Dendritic cell treated with granulocyte-macrophage colony-stimulating factor and Interleukin-4, amounts not matched to agents 40 ng/mL and 50 ng/mL, for 4 days (primary cell): ENCODE measurements at regions of chr10 and their contacts with region 1.

Region 1: GRCh38 chr10:74262856-74263255 is 111.8 kb downstream of the ADK start:
- H3K4me3 Mint-ChIP-seq: no peak overlapping the region
- H3K27ac Mint-ChIP-seq: no peak overlapping the region
- H3K4me1 Mint-ChIP-seq: peaks cover 9% of the 10 kb centered on the region
- H3K27me3 Mint-ChIP-seq: no peaks in the 10 kb centered on the region

Region 2: GRCh38 chr10:74328388-74328787 is 65.5 kb after region 1 on chr10:
- intact Hi-C with region 1: no loop called
- H3K4me3 Mint-ChIP-seq: no peak overlapping the region
- H3K27ac Mint-ChIP-seq: peak overlapping the region; percentile 84
- H3K4me1 Mint-ChIP-seq: peaks cover 21% of the 10 kb centered on the region
- H3K27me3 Mint-ChIP-seq: no peaks in the 10 kb centered on the region

Region 3: GRCh38 chr10:74382663-74383062 is 119.8 kb after region 1 on chr10:
- intact Hi-C with region 1: no loop called
- H3K4me3 Mint-ChIP-seq: no peak overlapping the region
- H3K27ac Mint-ChIP-seq: no peak overlapping the region
- H3K4me1 Mint-ChIP-seq: peaks cover 33% of the 10 kb centered on the region
- H3K27me3 Mint-ChIP-seq: no peaks in the 10 kb centered on the region

Region 4: DNA sequence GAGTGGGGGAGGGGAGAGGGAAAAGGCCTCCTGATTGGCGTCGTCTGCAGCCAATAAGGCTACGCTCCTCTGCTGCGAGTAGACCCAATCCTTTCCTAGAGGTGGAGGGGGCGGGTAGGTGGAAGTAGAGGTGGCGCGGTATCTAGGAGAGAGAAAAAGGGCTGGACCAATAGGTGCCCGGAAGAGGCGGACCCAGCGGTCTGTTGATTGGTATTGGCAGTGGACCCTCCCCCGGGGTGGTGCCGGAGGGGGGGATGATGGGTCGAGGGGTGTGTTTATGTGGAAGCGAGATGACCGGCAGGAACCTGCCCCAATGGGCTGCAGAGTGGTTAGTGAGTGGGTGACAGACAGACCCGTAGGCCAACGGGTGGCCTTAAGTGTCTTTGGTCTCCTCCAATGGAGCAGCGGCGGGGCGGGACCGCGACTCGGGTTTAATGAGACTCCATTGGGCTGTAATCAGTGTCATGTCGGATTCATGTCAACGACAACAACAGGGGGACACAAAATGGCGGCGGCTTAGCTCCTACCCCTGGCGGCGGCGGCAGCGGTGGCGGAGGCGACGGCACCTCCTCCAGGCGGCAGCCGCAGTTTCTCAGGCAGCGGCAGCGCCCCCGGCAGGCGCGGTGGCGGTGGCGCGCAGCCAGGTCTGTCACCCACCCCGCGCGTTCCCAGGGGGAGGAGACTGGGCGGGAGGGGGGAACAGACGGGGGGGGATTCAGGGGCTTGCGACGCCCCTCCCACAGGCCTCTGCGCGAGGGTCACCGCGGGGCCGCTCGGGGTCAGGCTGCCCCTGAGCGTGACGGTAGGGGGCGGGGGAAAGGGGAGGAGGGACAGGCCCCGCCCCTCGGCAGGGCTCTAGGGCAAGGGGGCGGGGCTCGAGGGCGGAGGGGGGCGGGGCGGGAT is 563.5 kb after region 1 on chr10 and contains the start of gene KAT6B:
- intact Hi-C with region 1: loop called (anchors 10 kb)
- H3K4me3 Mint-ChIP-seq: peak within 1 kb of the TSS; percentile 92
- H3K27ac Mint-ChIP-seq: peak within 1 kb of the TSS; percentile 91
- H3K4me1 Mint-ChIP-seq: peaks cover 41% of the 10 kb centered on the region
- H3K27me3 Mint-ChIP-seq: peaks cover 8% of the 10 kb centered on the region

Region 5: DNA sequence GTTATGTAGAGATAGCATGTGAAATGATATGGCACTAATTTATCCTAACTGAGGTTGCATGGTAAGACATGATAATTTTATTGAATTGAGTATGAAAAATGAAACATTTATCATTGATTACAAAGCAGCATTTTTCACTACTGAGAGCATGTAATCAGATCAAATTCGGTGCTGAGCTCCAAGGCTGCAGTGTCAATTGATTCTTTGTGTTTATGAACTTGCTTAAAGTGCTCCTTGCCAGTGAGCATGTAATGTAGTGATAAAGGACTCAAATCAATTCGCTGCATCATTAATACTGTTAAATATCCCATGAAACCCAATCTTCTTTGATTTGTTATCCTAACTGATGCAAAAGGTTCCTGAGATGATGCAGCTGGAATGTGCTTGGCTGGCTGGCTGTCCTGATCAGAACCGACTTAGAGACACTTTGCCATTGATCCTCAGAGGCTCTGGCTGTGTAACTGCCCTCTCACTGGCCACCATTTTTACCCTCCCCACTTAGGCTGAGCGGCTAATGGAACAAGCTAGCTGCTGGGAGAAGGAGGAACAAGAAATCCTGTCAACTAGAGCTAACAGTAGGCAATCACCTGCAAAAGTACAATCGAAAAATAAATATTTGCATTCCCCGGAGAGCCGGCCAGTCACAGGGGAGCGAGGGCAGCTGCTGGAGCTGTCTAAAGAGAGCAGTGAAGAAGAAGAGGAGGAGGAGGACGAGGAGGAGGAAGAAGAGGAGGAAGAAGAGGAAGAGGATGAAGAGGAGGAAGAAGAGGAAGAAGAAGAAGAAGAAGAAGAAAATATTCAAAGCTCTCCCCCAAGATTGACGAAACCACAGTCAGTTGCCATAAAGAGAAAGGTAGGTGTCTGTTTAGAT is 758.8 kb after region 1 on chr10:
- intact Hi-C with region 1: loop called (anchors 5 kb)
- H3K4me3 Mint-ChIP-seq: no peak overlapping the region
- H3K27ac Mint-ChIP-seq: peak overlapping the region; percentile 2
- H3K4me1 Mint-ChIP-seq: peaks cover 9% of the 10 kb centered on the region
- H3K27me3 Mint-ChIP-seq: no peaks in the 10 kb centered on the region

Region 6: GRCh38 chr10:75099952-75100763 is 837.3 kb after region 1 on chr10:
- intact Hi-C with region 1: loop called (anchors 2 kb)
- H3K4me3 Mint-ChIP-seq: no peak overlapping the region
- H3K27ac Mint-ChIP-seq: peak overlapping the region; percentile 54
- H3K4me1 Mint-ChIP-seq: peaks cover 26% of the 10 kb centered on the region
- H3K27me3 Mint-ChIP-seq: peaks cover 5% of the 10 kb centered on the region

Region 7: DNA sequence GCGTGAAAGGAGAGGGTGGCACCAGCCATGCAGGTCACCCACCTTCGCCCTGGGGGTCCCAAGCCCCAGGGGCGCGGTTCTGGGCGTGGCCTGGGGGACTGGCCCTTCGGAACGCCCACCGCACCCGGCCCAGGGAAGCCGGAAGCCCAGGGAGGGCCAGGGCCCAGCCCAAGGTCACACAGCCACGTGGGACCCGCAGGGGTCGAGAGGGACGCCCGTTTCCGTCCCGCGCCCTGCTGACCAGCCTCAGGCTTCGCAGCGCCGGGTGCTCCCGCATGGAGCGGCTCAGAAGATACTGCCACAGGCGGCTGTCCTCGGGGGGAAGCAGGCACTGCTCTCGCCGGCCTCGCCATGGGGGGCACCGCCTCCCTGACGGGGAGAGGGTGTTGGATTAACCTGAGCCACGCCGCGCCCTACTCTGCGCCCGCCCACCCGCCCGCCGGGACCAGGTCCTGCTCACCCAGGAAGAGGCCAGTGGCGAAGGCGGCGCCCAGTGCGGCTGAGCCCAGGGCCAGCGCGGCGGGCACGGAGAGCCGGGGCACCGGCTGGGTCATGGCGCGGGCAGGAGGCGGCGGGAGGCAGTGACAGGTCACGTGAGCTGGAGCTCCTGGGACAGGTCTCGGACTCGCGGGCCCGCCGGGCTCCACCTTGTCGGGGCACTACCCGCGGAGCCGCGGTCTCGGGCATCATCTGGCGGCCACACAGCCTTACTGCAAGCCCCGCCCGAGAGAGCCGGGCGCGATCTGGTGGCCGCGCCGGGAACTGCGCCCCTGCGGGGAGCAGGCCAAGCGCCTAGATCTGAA is 972.7 kb after region 1 on chr10 and contains the start of gene COMTD1:
- intact Hi-C with region 1: loop called (anchors 10 kb)
- H3K4me3 Mint-ChIP-seq: peak within 1 kb of the TSS; percentile 83
- H3K27ac Mint-ChIP-seq: peak within 1 kb of the TSS; percentile 72
- H3K4me1 Mint-ChIP-seq: peaks cover 21% of the 10 kb centered on the region
- H3K27me3 Mint-ChIP-seq: no peaks in the 10 kb centered on the region